CD4-positive, alpha-beta memory T cell (primary cell): ENCODE measurements at regions of chr6 and their contacts with region 1.

Region 1: GRCh38 chr6:111737065-111737521 is 131.4 kb upstream of the TRAF3IP2 start:
- DNase-seq: peak in 1 of 5 donors; percentile 78
- H3K4me3 ChIP-seq: no peak overlapping the region
- H3K4me3 Mint-ChIP-seq: peak overlapping the region in 7 of 8 donors; percentile 32 to 81 (median 69)
- H3K27ac ChIP-seq: peak overlapping the region; percentile 32
- H3K27ac Mint-ChIP-seq: peak overlapping the region; percentile 87 to 97 (median 93)
- H3K4me1 ChIP-seq: peaks cover 100% of the 10 kb centered on the region
- H3K4me1 Mint-ChIP-seq: peaks cover 74 to 100% (median 86%) of the 10 kb centered on the region in 4 donors
- H3K27me3 ChIP-seq: no peaks in the 10 kb centered on the region
- H3K27me3 Mint-ChIP-seq: no peaks in the 10 kb centered on the region

Region 2: DNA sequence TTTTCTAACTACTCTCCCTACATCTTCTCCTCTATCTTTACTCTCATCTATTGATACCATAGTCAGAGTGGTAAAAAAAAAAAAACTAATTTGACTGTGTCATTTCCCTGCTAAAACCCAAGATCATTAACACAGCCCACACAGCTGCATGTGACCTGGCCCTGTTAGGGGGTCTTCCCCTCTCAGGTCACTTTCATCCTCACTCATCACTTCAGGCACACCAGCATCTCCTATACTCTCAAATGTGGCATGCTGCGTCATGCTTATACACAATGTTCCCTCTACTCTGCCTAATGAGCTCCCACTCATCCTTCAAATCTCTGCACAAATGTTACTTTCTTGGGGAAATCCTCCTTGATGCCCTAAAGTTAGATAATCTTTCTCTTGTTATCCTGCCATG is 1008.6 kb before region 1 on chr6:
- CTCF ChIA-PET with region 1: no interaction called
- POLR2A ChIA-PET with region 1: no interaction called
- intact Hi-C with region 1: no loop called
- DNase-seq: no peak
- H3K4me3 ChIP-seq: no peak overlapping the region
- H3K4me3 Mint-ChIP-seq: no peak overlapping the region
- H3K27ac ChIP-seq: no peak overlapping the region
- H3K27ac Mint-ChIP-seq: peak overlapping the region in 1 of 7 donors; percentile 53
- H3K4me1 ChIP-seq: no peaks in the 10 kb centered on the region
- H3K4me1 Mint-ChIP-seq: peaks cover 0 to 2% (median 0%) of the 10 kb centered on the region in 4 donors
- H3K27me3 ChIP-seq: no peaks in the 10 kb centered on the region
- H3K27me3 Mint-ChIP-seq: no peaks in the 10 kb centered on the region

Region 3: GRCh38 chr6:111721753-111722154 is 15.3 kb before region 1 on chr6:
- CTCF ChIA-PET with region 1: interaction called, 19 read pairs
- POLR2A ChIA-PET with region 1: interaction called, 33 read pairs
- intact Hi-C with region 1: loop called (anchors 2 kb)
- DNase-seq: peak; percentile 46 to 57 (median 50)
- H3K4me3 ChIP-seq: no peak overlapping the region
- H3K4me3 Mint-ChIP-seq: peak overlapping the region in 3 of 8 donors; percentile 17 to 81 (median 39)
- H3K27ac ChIP-seq: no peak overlapping the region
- H3K27ac Mint-ChIP-seq: peak overlapping the region; percentile 77 to 92 (median 88)
- H3K4me1 ChIP-seq: peaks cover 76% of the 10 kb centered on the region
- H3K4me1 Mint-ChIP-seq: peaks cover 61 to 84% (median 75%) of the 10 kb centered on the region in 4 donors
- H3K27me3 ChIP-seq: no peaks in the 10 kb centered on the region
- H3K27me3 Mint-ChIP-seq: no peaks in the 10 kb centered on the region